Body of pancreas (tissue), 4 donors: ENCODE measurements at regions of chr2 and their contacts with region 1.

Region 1: DNA sequence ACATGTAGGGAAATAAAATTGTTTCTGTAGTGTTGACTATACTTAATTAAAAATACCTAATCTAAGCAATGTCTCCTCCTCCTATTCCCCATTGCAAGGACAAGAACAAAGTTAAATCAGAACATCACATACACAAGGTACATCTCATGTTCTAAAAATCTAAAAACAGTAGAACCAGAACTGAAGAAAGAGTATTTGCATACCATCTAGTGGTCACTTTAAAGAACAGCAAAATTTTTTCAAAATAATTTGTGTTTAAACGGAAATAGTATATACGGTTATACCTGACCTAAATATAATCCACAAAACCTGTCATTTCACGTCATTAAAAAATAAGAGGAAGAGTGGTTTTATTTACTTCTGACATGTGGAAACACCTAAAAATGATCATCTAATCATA is 294.3 kb upstream of the KCNH7 start:
- DNase-seq: no peak
- ATAC-seq: no peak
- H3K4me3 ChIP-seq: no peak overlapping the region
- H3K27ac ChIP-seq: no peak overlapping the region
- H3K4me1 ChIP-seq: no peaks in the 10 kb centered on the region
- H3K27me3 ChIP-seq: no peaks in the 10 kb centered on the region
- CTCF ChIP-seq: peak in 6 of 7 experiments; percentile 26 to 59 (median 51)
- POLR2A ChIP-seq: no peak

Region 2: DNA sequence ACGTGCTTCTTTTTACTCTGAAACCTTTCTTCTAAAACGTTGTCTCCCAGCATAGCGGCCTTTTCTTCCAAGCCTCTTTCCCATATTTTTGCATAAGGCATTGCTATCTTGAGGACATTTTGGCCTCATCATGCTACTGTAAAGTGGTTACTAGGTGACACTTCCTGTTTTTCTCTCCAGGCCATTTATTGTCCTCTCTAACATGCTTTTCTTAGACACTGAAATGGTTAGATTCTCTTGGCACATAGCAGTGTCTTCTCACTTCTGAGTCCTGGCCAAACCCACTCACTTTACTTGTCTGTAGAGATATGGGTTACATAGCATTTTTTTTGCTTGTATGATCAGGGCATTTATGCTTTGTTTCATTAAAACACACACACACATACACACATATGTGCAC is 244.2 kb before region 1 on chr2:
- intact Hi-C with region 1: loop called (anchors 10 kb)
- DNase-seq: no peak
- ATAC-seq: no peak
- H3K4me3 ChIP-seq: no peak overlapping the region
- H3K27ac ChIP-seq: no peak overlapping the region
- H3K4me1 ChIP-seq: no peaks in the 10 kb centered on the region
- H3K27me3 ChIP-seq: no peaks in the 10 kb centered on the region
- CTCF ChIP-seq: no peak
- POLR2A ChIP-seq: no peak